MCF 10A (cell line): ENCODE measurements at regions of chr9 and their contacts with region 1.

Region 1: GRCh38 chr9:101508211-101508610 is 25.4 kb upstream of the RNF20 start:
- DNase-seq: no peak
- H3K4me3 Mint-ChIP-seq: no peak overlapping the region
- H3K27ac Mint-ChIP-seq: no peak overlapping the region
- H3K4me1 Mint-ChIP-seq: no peaks in the 10 kb centered on the region
- H3K27me3 Mint-ChIP-seq: no peaks in the 10 kb centered on the region
- CTCF ChIP-seq: no peak

Region 2: GRCh38 chr9:101479338-101480030 is 28.7 kb before region 1 on chr9:
- CTCF ChIA-PET with region 1: interaction called, 6 read pairs
- POLR2A ChIA-PET with region 1: interaction called, 25 read pairs
- intact Hi-C with region 1: no loop called
- DNase-seq: peak; percentile 92
- H3K4me3 Mint-ChIP-seq: peak overlapping the region; percentile 44
- H3K27ac Mint-ChIP-seq: peak overlapping the region; percentile 60
- H3K4me1 Mint-ChIP-seq: peaks cover 68% of the 10 kb centered on the region
- H3K27me3 Mint-ChIP-seq: no peaks in the 10 kb centered on the region
- CTCF ChIP-seq: no peak

Region 3: DNA sequence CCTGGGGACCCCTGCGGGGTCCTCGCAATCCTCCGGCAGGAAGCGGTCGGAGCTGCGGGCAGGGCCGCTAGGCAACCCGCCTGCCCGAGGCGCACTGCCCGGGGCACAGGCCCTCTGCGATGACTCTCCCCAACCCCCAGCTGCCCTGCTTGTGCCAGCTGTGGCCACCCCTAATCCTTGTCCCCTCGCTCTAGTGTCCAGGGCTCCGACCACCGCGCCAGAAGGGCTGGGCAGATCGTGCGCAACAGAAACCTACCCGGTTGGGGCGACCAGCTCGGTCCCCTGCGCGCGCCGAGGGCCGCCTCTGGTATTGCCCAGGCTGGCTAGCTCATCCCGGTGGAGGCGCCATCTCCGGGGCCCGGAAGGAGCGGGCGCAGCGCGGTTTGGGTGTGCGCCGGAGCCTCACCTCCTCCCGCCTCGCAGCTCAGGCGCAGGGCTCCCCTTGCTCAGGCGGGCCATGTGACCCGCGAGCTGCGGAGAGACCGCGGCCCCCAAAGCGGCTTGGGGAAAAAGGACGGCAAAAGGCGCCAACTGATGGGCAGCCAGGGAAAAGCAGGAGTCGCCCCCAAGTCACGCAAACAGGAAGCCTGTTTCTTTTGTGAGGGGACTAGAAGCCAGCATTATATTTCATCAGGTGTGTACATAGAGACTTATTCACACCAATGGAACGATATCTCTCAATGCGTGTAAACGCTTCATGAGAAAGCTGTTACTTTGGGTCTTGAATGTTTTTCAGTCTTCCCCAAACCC is 21.3 kb before region 1 on chr9:
- CTCF ChIA-PET with region 1: interaction called, 6 read pairs
- POLR2A ChIA-PET with region 1: interaction called, 25 read pairs
- intact Hi-C with region 1: no loop called
- DNase-seq: peak; percentile 71
- H3K4me3 Mint-ChIP-seq: peak overlapping the region; percentile 82
- H3K27ac Mint-ChIP-seq: peak overlapping the region; percentile 92
- H3K4me1 Mint-ChIP-seq: peaks cover 25% of the 10 kb centered on the region
- H3K27me3 Mint-ChIP-seq: no peaks in the 10 kb centered on the region
- CTCF ChIP-seq: peak; percentile 4

Region 4: DNA sequence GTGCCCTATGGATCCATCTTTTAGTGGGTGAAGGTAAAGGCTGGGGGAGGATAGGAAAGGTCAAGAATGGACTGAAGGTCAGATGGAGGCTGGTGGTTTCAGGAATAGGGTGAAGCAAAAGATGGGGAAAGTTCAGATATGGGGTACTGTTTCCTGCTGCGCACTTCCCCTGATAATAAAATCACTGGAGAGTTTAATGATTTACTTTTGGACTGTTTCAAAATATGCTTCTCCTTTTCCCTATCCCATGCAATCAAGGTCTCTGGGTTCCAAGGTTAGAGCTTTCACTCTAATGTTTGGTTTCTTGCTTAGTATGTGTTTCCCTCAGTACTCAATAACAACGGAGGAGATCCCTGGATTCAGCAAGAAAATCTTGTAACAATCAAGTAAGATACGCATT is 97.3 kb after region 1 on chr9:
- CTCF ChIA-PET with region 1: no interaction called
- POLR2A ChIA-PET with region 1: no interaction called
- intact Hi-C with region 1: no loop called
- DNase-seq: no peak
- H3K4me3 Mint-ChIP-seq: no peak overlapping the region
- H3K27ac Mint-ChIP-seq: no peak overlapping the region
- H3K4me1 Mint-ChIP-seq: no peaks in the 10 kb centered on the region
- H3K27me3 Mint-ChIP-seq: peaks cover 72% of the 10 kb centered on the region
- CTCF ChIP-seq: no peak